Posterior cingulate gyrus (tissue), 11 donors: ENCODE measurements at regions of chr15 and their contacts with region 1.

Region 1: DNA sequence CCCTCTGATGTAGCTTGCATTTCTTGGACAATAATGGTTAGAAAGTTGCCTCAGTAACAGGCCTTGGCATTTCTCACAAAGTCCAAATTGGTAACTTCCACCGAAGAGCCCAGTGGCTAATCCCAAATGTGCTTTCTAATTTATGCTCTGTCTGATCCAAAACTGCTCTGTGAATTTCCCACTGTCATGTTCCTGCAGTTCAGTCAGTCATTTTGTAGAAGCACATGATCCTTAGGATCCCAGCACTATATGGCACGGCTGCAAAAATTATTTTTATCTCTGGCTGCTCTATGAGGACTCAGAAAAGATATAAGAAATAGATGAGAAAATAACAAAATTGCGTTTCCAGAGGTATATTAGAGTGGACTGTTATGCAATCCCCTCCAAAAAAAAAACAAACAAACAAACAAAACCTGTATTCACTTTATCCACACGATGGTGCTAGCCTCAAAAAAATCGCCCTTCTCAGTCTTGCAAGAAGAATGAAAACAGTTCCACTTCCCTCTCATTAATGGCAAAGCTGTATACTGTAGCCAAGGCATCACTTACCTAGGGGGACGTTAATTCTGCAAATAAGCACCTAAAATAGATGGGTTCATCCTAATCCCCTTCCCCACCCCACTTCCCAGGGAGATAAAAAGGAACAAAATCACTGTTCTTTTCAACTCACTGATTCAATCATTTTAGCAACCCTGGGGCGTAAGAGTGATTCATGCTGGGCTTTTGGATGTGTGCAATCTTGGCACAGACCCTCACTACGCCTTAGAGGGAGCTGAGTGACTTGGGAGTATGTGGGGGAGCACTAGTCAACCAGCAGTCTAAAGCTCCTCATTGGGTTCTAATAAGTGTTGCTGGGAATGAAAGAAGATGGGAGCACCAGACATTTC is 61.3 kb downstream of the TMCO5A start:
- DNase-seq: peak in 3 of 10 donors; percentile 27 to 86 (median 37)

Region 2: GRCh38 chr15:38050529-38051448 is 55.1 kb after region 1 on chr15:
- intact Hi-C with region 1: no loop called
- DNase-seq: no peak

Region 3: DNA sequence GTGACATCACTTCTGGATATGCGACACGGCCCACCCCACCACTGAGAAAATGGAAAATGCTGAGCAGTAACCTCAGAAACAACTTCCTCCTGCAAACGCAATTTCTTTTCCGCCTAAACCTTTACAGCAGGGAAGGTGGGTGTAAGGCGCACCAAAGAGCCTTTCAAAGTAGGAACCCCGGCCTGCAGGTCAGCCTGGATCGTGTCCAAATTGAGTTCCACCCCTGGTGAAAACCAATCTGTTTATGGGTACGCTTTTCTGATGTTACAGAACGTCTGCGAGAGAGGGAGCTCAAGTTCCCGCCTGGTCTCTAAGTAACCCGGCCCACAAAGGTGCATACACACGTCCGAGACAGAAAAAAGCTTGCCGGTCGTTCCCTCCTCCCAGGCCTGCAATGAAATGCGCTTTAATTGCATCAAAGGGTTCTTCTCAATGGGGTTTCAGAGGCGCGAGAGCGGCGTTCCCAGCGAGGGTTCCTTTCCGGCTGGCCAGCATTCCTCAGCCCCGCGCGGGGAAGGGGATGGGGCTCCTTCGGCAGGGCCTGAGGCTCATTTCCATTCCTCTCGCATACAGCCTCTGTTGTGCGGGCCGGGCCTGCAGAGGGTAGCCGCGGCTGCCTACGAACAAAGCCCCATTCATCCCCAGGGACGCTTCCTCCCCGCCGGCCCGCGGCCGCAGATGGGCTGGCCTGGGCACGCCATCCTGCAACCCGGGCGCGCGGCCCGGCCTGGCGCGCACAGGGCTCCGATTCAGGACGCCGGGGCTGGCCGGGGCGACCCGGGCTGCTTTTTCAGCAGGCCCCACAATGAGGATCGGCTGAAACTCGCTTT is 76.9 kb after region 1 on chr15:
- intact Hi-C with region 1: loop called (anchors 10 kb)
- DNase-seq: peak; percentile 83 to 99 (median 90)

Region 4: GRCh38 chr15:38354315-38354929 is 358.7 kb after region 1 on chr15:
- intact Hi-C with region 1: loop called (anchors 1 kb)
- DNase-seq: peak in 6 of 10 donors; percentile 46 to 88 (median 64)

Region 5: DNA sequence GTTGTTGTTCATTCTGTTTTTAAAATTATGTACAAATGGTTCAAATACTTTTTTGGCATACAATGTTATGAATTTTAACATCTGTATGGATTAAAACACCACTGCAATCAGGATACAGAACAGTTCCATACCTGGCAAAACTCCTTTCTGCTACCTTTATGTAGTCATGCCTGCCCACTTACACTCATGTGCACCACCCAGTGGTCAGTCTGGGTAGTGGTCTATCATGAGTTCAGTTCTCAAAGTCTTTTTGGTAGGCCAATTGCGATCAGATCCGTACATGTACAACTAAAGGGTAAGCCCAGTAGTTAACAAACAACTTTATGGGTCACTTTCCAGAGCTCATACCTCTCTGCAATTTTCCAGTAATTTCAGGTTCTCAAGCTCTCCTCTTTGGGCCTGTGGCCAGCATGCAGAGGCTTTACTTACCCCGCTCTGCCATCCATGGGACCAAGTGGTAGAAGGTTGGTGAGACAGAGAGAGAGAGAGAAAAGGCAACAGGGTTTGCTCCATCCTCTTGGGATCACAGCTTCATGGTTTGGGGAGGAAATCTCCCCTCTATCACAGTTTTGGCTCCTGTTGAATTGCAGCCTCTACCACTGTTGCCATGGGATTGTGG is 394.3 kb after region 1 on chr15:
- intact Hi-C with region 1: loop called (anchors 10 kb)
- DNase-seq: peak in 5 of 10 donors; percentile 54 to 67 (median 58)

Region 6: GRCh38 chr15:38683382-38684242 is 687.9 kb after region 1 on chr15:
- intact Hi-C with region 1: loop called (anchors 5 kb)
- DNase-seq: peak in 9 of 10 donors; percentile 31 to 90 (median 65)

Region 7: GRCh38 chr15:38878926-38879325 is 883.2 kb after region 1 on chr15:
- intact Hi-C with region 1: no loop called
- DNase-seq: no peak